ENCODE measurements at regions of chr2 and their contacts with region 1.

Region 1: DNA sequence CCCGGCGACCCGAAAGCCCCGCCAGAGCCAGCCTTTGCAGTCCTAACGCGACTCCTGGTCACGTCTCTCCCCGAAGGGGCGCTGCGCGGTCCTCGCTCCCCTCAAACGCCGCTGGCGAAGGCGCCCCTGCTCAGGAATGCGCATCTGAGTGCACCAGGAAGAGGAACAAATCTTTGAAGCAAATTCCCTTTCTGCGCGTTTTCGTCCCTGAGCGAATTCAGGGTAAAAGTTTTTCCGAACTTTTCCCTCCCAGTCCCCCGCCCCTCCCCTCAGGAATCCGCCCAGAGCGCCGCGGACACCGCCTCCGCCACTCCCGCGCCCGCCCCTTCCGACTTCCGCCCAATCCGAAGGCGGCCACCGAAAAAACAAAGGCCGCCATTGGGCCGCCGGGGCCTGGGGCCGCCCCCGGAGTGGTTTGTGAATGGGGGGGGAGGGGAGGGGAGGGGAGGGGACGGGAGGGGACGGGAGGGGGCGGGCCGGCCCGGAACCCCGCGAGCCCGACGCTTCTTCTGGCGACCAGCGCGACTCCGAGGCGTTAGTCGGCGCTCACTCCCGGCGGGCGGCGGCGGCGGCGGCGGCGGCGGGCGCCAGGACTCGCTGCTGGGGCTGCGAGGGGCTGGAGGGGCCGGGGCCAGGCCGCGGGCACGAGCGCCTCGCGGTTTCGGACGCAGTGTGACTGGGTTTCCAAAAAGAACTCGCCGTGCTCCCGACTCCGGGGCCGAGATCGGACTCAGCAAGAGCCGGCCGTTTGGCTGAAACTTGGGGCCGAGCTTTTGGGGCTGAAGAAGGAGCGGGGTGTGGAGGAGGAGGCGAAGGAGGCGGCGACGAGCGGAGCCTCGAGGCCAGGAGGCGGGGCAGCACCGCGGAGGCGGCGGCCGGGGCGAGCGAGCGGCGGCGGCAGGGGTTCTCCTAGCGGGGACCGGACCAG is at the start of gene FZD7:
- DNase-seq: peak; percentile 66 to 91 (median 83)
- ATAC-seq: peak; percentile 78
- H3K4me3 ChIP-seq: peak within 1 kb of the TSS; percentile 77 to 84
- H3K4me3 Mint-ChIP-seq: peak within 1 kb of the TSS; percentile 88
- H3K27ac ChIP-seq: peak within 1 kb of the TSS in 1 of 2 experiments; percentile 14
- H3K27ac Mint-ChIP-seq: no peak within 1 kb of the TSS
- H3K4me1 ChIP-seq: peaks cover 25% of the 10 kb centered on the region
- H3K4me1 Mint-ChIP-seq: peaks cover 13% of the 10 kb centered on the region
- H3K27me3 ChIP-seq: peaks cover 26 to 29% of the 10 kb centered on the region in 2 experiments
- H3K27me3 Mint-ChIP-seq: peaks cover 12% of the 10 kb centered on the region
- CTCF ChIP-seq: no peak
- total RNA-seq, gene FZD7: 0.73 to 0.97 TPM

Region 2: GRCh38 chr2:200525882-200526651 is 1507.5 kb before region 1 on chr2 and contains the start of gene SGO2:
- CTCF ChIA-PET with region 1: no interaction called
- POLR2A ChIA-PET with region 1: no interaction called
- intact Hi-C with region 1: loop called (anchors 5 to 10 kb)
- DNase-seq: peak; percentile 92 to 97 (median 95)
- ATAC-seq: peak; percentile 100
- H3K4me3 ChIP-seq: peak within 1 kb of the TSS; percentile 73 to 84
- H3K4me3 Mint-ChIP-seq: peak within 1 kb of the TSS; percentile 91
- H3K27ac ChIP-seq: peak within 1 kb of the TSS; percentile 18 to 71
- H3K27ac Mint-ChIP-seq: peak within 1 kb of the TSS; percentile 87
- H3K4me1 ChIP-seq: peaks cover 7% of the 10 kb centered on the region
- H3K4me1 Mint-ChIP-seq: peaks cover 10% of the 10 kb centered on the region
- H3K27me3 ChIP-seq: no peaks in the 10 kb centered on the region
- H3K27me3 Mint-ChIP-seq: no peaks in the 10 kb centered on the region
- CTCF ChIP-seq: no peak
- total RNA-seq, gene SGO2: 0.52 to 0.69 TPM

Region 3: GRCh38 chr2:201642579-201643215 is 390.9 kb before region 1 on chr2:
- CTCF ChIA-PET with region 1: no interaction called
- POLR2A ChIA-PET with region 1: no interaction called
- intact Hi-C with region 1: loop called (anchors 1 to 5 kb)
- DNase-seq: peak; percentile 65 to 91 (median 83)
- ATAC-seq: peak; percentile 86
- H3K4me3 ChIP-seq: peak overlapping the region; percentile 98 to 99
- H3K4me3 Mint-ChIP-seq: peak overlapping the region; percentile 90
- H3K27ac ChIP-seq: peak overlapping the region; percentile 89 to 99
- H3K27ac Mint-ChIP-seq: peak overlapping the region; percentile 96
- H3K4me1 ChIP-seq: no peaks in the 10 kb centered on the region
- H3K4me1 Mint-ChIP-seq: peaks cover 14% of the 10 kb centered on the region
- H3K27me3 ChIP-seq: no peaks in the 10 kb centered on the region
- H3K27me3 Mint-ChIP-seq: no peaks in the 10 kb centered on the region
- CTCF ChIP-seq: no peak

Region 4: DNA sequence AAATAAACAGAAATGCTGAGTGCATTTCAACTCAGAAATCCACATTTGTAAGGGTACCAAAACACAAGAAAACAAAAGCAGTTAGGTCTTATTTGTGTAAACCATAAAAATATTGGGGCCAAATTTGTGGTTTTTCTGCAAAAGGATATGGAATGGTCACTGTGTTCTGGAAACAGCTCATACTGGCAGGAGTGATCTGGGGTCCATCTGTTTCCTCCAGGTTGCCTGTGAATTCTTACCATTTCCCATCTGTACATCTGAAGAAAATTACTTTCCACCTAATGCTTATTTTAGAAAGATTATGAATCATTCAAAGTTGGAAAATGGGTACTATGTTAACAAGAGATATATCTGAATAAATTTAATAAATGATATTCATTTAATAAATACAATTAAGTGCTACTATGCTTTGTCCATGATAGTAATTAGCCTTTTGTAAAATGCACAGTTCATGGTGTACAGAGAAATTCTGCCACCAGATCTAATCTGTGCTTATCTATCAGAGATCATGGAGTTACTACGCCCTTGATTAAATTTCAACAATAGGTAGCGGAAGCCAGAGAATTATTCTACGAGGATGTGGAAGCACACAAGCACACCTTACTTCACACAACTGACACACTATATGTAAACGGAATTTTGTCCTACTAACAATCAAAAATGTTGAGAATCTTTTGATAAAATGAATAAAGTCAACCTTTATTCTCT is 263.8 kb before region 1 on chr2:
- CTCF ChIA-PET with region 1: no interaction called
- POLR2A ChIA-PET with region 1: no interaction called
- intact Hi-C with region 1: loop called in 1 of 2 experiments (anchors 5 kb)
- DNase-seq: no peak
- ATAC-seq: no peak
- H3K4me3 ChIP-seq: no peak overlapping the region
- H3K4me3 Mint-ChIP-seq: no peak overlapping the region
- H3K27ac ChIP-seq: no peak overlapping the region
- H3K27ac Mint-ChIP-seq: no peak overlapping the region
- H3K4me1 ChIP-seq: no peaks in the 10 kb centered on the region
- H3K4me1 Mint-ChIP-seq: peaks cover 2% of the 10 kb centered on the region
- H3K27me3 ChIP-seq: no peaks in the 10 kb centered on the region
- H3K27me3 Mint-ChIP-seq: no peaks in the 10 kb centered on the region
- CTCF ChIP-seq: no peak

Region 5: GRCh38 chr2:202238234-202239197 is 204.9 kb after region 1 on chr2 and contains the start of gene SUMO1:
- CTCF ChIA-PET with region 1: no interaction called
- POLR2A ChIA-PET with region 1: no interaction called
- intact Hi-C with region 1: loop called in 1 of 2 experiments (anchors 1 kb)
- DNase-seq: peak; percentile 79 to 95 (median 92)
- ATAC-seq: peak; percentile 93
- H3K4me3 ChIP-seq: peak within 1 kb of the TSS; percentile 82 to 83
- H3K4me3 Mint-ChIP-seq: peak within 1 kb of the TSS; percentile 99
- H3K27ac ChIP-seq: peak within 1 kb of the TSS; percentile 82
- H3K27ac Mint-ChIP-seq: peak within 1 kb of the TSS; percentile 99
- H3K4me1 ChIP-seq: peaks cover 15% of the 10 kb centered on the region
- H3K4me1 Mint-ChIP-seq: peaks cover 43% of the 10 kb centered on the region
- H3K27me3 ChIP-seq: no peaks in the 10 kb centered on the region
- H3K27me3 Mint-ChIP-seq: no peaks in the 10 kb centered on the region
- CTCF ChIP-seq: no peak
- total RNA-seq, gene SUMO1: 86.1 to 87.4 TPM

Region 6: GRCh38 chr2:203014456-203015199 is 981.0 kb after region 1 on chr2 and contains the start of gene NBEAL1:
- CTCF ChIA-PET with region 1: no interaction called
- POLR2A ChIA-PET with region 1: no interaction called
- intact Hi-C with region 1: loop called (anchors 10 kb)
- DNase-seq: peak; percentile 92 to 99 (median 95)
- ATAC-seq: peak; percentile 90
- H3K4me3 ChIP-seq: peak within 1 kb of the TSS; percentile 77 to 97
- H3K4me3 Mint-ChIP-seq: peak within 1 kb of the TSS; percentile 88
- H3K27ac ChIP-seq: peak within 1 kb of the TSS; percentile 86 to 89
- H3K27ac Mint-ChIP-seq: peak within 1 kb of the TSS; percentile 92
- H3K4me1 ChIP-seq: peaks cover 37% of the 10 kb centered on the region
- H3K4me1 Mint-ChIP-seq: peaks cover 46% of the 10 kb centered on the region
- H3K27me3 ChIP-seq: no peaks in the 10 kb centered on the region
- H3K27me3 Mint-ChIP-seq: no peaks in the 10 kb centered on the region
- CTCF ChIP-seq: no peak
- total RNA-seq, gene NBEAL1: 11.2 to 13.2 TPM

Measured in CD8-positive, alpha-beta T cell (primary cell).